Ascending aorta (tissue), 2 donors: ENCODE measurements at regions of chr9 and their contacts with region 1.

Region 1: DNA sequence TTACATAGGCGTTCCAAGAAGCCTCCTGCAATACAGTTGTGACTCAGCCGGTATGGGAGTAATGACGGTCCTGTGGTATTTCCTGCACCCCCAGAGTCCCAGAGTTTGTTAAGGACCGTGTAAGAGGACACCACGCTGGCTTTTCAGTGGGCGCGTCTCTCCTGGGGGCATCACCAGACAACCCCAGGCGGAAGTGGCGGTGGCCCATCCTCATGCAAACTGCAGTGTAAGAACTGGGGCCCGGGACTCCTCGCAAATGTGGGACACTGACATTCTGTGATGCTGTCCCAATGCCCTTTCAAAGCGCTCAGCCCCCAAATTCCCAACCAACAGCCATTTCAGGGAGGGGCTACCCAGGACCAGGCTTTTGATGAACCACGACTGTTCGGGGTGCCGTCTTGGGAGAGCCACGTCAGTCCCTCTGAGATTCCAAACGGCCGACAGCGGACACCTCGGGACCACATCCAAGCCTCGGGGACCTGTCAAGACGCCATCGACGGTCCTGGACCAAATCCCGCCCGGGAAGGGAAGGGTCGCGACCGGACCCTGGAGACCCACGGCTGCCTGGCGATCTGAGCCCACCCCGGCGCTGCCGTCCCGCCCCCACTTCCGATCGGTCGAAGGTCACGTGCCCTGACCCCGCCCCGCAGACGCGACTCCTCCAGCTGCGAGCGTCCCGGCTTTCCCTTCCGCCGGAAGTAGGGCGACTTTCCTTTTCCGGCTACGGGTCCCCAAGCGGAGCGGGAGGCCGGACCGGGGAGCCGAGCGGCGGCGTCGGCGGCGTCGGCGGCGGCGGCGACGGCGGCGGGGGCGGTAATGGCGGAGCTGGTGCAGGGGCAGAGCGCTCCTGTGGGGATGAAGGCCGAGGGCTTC is at the start of gene FUBP3:
- DNase-seq: peak; percentile 68 to 96
- H3K4me3 ChIP-seq: peak within 1 kb of the TSS; percentile 67 to 99
- H3K27ac ChIP-seq: peak within 1 kb of the TSS; percentile 87 to 92
- H3K4me1 ChIP-seq: peaks cover 3 to 14% of the 10 kb centered on the region in 2 donors
- H3K27me3 ChIP-seq: no peaks in the 10 kb centered on the region
- CTCF ChIP-seq: no peak
- total RNA-seq, gene FUBP3: 14.5 TPM

Region 2: DNA sequence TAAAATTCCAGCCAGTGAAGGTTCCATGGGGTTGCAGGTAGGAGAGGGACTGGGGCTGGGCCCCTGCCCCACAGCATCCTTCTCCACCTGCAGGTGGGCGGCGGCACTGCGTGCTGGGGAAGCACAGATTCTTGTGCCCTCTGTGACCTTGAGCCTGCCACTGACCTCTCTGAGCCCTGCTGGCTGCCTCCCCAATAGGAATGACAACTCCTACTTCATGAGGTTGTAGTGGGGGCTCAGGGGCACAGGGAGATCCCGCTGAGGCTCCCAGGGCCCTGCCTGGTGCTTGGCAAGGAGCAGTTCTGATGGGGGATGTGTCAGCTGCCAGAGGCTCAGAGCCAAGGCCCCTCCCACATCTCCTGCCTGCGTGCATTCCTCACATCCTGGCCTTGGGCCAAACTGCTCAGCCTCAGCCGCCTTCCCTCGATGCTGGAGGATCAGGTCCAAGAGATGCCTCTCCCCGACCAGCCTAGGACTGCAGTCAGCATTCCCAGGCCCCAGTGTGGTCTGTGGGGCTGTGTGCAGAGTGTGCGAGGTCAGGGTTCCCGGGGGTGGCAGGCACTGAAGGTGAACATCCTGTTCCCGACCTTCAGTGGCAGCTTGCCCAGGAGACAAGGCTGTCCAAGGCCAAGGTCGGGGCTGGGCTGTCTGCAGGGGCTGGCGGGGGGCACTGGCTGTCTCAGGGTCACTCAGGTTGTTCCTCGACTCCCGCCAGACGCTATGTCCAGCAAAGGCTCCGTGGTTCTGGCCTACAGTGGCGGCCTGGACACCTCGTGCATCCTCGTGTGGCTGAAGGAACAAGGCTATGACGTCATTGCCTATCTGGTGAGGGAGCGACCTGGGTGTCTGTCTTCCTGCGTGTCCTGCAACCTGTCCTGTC is 127.4 kb before region 1 on chr9:
- intact Hi-C with region 1: loop called (anchors 5 kb)
- DNase-seq: peak in 1 of 2 donors; percentile 88
- H3K4me3 ChIP-seq: no peak overlapping the region
- H3K27ac ChIP-seq: peak overlapping the region; percentile 29 to 53
- H3K4me1 ChIP-seq: peaks cover 24 to 32% of the 10 kb centered on the region in 2 donors
- H3K27me3 ChIP-seq: no peaks in the 10 kb centered on the region
- CTCF ChIP-seq: peak; percentile 16 to 24 (median 18)